HepG2 (cell line): ENCODE measurements at regions of chr14 and their contacts with region 1.

Region 1: DNA sequence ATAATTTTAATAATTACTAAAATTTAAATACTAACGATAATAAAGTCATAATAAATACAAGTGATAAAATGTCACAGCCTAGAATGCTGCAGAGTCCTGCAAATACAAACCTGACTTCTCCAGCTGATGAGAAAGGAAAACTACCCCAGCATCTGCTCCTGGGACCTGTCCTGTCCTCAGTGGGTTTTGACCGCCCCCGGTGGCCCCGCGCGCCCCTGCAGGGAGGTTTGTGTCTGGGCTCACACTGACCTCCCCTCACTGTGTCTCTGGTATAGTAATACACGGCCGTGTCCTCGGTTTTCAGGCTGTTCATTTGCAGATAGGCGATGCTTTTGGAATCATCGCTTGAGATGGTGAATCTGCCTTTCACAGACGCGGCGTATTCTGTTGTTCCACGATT is 1139.4 kb downstream of the TMEM121 start:
- DNase-seq: no peak
- ATAC-seq: no peak
- H3K4me3 ChIP-seq: no peak overlapping the region
- H3K27ac ChIP-seq: no peak overlapping the region
- H3K4me1 ChIP-seq: no peaks in the 10 kb centered on the region
- H3K27me3 ChIP-seq: no peaks in the 10 kb centered on the region
- CTCF ChIP-seq: no peak
- EP300 ChIP-seq: no peak
- POLR2A ChIP-seq: no peak
- RAD21 ChIP-seq: no peak

Region 2: GRCh38 chr14:106417224-106418049 is 248.4 kb before region 1 on chr14:
- CTCF ChIA-PET with region 1: interaction called, 13 read pairs
- POLR2A ChIA-PET with region 1: no interaction called
- in situ Hi-C with region 1: no loop called
- intact Hi-C with region 1: no loop called
- DNase-seq: peak; percentile 41
- ATAC-seq: peak; percentile 51
- H3K4me3 ChIP-seq: no peak overlapping the region
- H3K27ac ChIP-seq: no peak overlapping the region
- H3K4me1 ChIP-seq: no peaks in the 10 kb centered on the region
- H3K27me3 ChIP-seq: no peaks in the 10 kb centered on the region
- CTCF ChIP-seq: peak; percentile 62
- EP300 ChIP-seq: no peak
- POLR2A ChIP-seq: no peak
- RAD21 ChIP-seq: no peak

Region 3: GRCh38 chr14:106872611-106873446 is 207.0 kb after region 1 on chr14:
- CTCF ChIA-PET with region 1: interaction called, 11 read pairs
- POLR2A ChIA-PET with region 1: no interaction called
- in situ Hi-C with region 1: no loop called
- intact Hi-C with region 1: no loop called
- DNase-seq: peak; percentile 84
- ATAC-seq: peak; percentile 98
- H3K4me3 ChIP-seq: no peak overlapping the region
- H3K27ac ChIP-seq: no peak overlapping the region
- H3K4me1 ChIP-seq: peaks cover 20% of the 10 kb centered on the region
- H3K27me3 ChIP-seq: no peaks in the 10 kb centered on the region
- CTCF ChIP-seq: peak; percentile 78
- EP300 ChIP-seq: no peak
- POLR2A ChIP-seq: no peak
- RAD21 ChIP-seq: peak; percentile 69

Region 4: DNA sequence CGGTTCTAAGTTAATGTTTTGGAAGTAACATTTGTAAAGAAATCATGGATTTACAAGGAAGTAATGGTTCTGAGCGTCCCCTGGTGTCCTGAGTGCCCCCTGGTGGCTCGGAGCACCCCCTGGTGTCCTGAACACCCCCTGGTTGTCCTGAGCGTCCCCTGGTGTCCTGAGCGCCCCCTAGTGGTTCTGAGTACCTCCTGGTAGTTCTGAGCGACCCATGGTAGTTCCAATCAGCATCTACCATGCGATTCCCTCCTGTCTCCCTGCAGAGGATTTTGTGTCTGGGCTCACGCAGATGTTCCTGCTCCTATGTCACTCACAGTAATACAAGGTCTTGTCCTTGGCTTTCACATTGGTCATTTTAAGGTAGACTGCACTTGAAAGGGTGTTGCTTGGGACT is 213.4 kb after region 1 on chr14:
- CTCF ChIA-PET with region 1: interaction called, 26 read pairs
- POLR2A ChIA-PET with region 1: no interaction called
- in situ Hi-C with region 1: no loop called
- intact Hi-C with region 1: no loop called
- DNase-seq: peak; percentile 65
- ATAC-seq: peak; percentile 92
- H3K4me3 ChIP-seq: no peak overlapping the region
- H3K27ac ChIP-seq: no peak overlapping the region
- H3K4me1 ChIP-seq: no peaks in the 10 kb centered on the region
- H3K27me3 ChIP-seq: no peaks in the 10 kb centered on the region
- CTCF ChIP-seq: peak; percentile 79
- EP300 ChIP-seq: no peak
- POLR2A ChIP-seq: no peak
- RAD21 ChIP-seq: no peak